CD4-positive, alpha-beta T cell (primary cell): ENCODE measurements at regions of chr14 and their contacts with region 1.

Region 1: GRCh38 chr14:105765893-105766614 is 239.7 kb downstream of the TMEM121 start:
- DNase-seq: no peak
- ATAC-seq: no peak
- H3K4me3 ChIP-seq: no peak overlapping the region
- H3K4me3 Mint-ChIP-seq: no peak overlapping the region
- H3K27ac ChIP-seq: no peak overlapping the region
- H3K27ac Mint-ChIP-seq: no peak overlapping the region
- H3K4me1 ChIP-seq: no peaks in the 10 kb centered on the region
- H3K4me1 Mint-ChIP-seq: no peaks in the 10 kb centered on the region
- H3K27me3 ChIP-seq: no peaks in the 10 kb centered on the region
- H3K27me3 Mint-ChIP-seq: peaks cover 6% of the 10 kb centered on the region
- CTCF ChIP-seq: no peak

Region 2: DNA sequence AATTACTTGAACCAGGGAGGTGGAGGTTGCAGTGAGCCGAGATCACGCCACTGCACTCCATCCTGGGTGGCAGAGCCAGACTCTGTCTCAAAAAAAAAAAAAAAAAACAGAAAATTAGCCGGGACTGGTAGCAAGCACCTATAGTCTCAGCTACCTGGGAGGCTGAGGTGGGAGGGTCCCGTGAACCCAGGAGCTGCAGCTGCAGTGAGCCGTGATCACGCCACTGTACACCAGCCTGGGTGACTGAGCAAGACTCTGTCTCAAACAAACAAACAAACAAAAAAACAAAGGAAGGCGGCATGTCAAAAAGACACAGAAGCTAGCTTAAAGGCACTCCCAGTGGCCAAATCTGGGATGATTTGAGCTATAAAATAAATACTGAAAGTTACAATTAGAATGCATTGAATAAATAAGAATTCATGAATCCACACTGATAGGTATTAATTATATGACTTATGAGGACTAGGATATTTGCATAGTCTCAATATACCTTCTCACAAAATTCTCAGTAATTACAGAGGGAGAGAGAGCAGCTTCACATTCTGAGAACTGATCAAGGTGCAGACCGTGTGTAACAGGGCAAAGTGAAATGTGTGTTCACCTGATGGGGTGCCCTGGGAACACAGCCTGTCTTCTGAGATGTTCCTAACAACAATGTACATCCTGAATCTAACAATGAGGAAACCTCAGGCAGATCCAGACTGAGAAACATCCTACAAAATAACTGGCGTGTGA is 658.1 kb before region 1 on chr14:
- CTCF ChIA-PET with region 1: no interaction called
- POLR2A ChIA-PET with region 1: no interaction called
- intact Hi-C with region 1: no loop called
- DNase-seq: no peak
- ATAC-seq: no peak
- H3K4me3 ChIP-seq: no peak overlapping the region
- H3K4me3 Mint-ChIP-seq: no peak overlapping the region
- H3K27ac ChIP-seq: no peak overlapping the region
- H3K27ac Mint-ChIP-seq: no peak overlapping the region
- H3K4me1 ChIP-seq: no peaks in the 10 kb centered on the region
- H3K4me1 Mint-ChIP-seq: no peaks in the 10 kb centered on the region
- H3K27me3 ChIP-seq: peaks cover 2 to 9% of the 10 kb centered on the region in 2 experiments
- H3K27me3 Mint-ChIP-seq: peaks cover 36% of the 10 kb centered on the region
- CTCF ChIP-seq: no peak

Region 3: DNA sequence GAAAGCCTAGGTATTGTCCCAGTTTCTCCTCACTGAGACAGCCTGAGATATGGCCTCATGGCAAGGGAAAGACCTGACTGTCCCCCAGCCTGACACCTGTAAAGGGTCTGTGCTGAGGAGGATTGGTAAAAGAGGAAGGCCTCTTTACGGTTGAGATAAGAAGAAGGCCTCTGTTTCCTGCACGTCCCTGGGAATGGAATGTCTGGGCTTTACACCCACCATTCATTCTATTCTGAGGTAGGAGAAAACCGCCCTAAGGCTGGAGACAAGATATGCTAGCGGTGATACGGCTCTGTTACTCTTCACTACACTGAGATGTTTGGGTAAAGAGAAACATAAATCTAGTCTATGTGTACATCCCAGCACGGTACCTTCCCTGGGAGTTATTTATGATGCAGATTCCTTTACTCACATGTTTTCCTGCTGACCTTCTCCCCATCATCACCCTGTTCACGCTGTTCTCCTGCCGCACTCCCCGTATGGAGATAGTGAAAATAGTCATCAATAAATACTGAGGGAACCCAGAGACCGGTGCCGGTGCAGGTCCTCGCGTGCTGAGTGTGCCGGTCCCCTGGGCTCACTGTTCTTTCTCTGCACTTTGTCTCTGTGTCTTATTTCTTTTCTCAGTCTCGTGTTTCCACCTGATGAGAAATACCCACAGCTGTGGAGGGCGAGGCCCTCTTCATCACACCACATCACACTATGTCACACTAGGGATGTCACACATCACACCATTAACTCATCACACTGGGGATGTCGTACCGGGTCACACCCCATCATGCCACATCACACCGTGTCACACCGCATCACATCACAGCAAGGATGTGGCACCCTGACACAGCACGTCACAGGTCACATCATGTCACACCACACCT is 33.1 kb before region 1 on chr14:
- CTCF ChIA-PET with region 1: no interaction called
- POLR2A ChIA-PET with region 1: no interaction called
- intact Hi-C with region 1: loop called in 1 of 2 experiments (anchors 5 kb)
- DNase-seq: no peak
- ATAC-seq: no peak
- H3K4me3 ChIP-seq: no peak overlapping the region
- H3K4me3 Mint-ChIP-seq: no peak overlapping the region
- H3K27ac ChIP-seq: no peak overlapping the region
- H3K27ac Mint-ChIP-seq: no peak overlapping the region
- H3K4me1 ChIP-seq: no peaks in the 10 kb centered on the region
- H3K4me1 Mint-ChIP-seq: no peaks in the 10 kb centered on the region
- H3K27me3 ChIP-seq: no peaks in the 10 kb centered on the region
- H3K27me3 Mint-ChIP-seq: peaks cover 10% of the 10 kb centered on the region
- CTCF ChIP-seq: no peak

Region 4: DNA sequence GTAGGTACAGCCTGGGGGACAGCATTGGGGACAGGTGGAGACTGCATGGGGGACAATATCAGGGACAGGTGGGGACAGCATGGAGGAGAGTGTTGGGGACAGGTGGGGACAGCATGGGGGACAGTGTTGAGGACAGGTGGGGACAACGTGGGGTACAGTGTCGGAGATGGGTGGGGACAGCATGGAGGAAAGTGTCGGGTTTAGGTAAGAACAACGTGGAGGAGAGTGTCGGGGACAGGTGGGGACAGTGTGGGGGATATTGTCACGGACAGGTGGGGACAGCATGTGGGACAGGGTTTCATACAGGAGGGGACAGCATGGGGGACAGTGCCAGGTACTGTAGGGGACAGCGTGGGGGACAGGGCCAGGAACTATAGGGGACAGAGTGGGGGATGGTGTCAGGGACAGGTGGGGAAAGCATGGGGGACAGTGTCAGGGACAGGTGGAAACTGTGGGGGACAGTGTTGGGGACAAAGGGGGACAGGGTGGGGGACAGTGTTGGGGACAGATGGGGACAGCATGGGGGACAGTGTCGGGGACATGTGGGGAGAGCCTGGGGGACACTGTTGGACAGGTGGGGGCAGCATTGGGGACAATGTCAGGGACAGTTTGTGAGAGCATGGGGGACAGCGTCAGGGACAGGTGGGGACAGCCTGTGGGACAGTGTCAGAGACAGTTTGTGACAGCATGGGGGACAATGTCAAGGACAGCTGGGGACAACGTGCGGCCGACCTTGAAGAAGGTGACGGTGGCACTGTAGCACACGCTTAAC is 26.5 kb before region 1 on chr14:
- CTCF ChIA-PET with region 1: no interaction called
- POLR2A ChIA-PET with region 1: no interaction called
- intact Hi-C with region 1: loop called in 1 of 2 experiments (anchors 2 kb)
- DNase-seq: no peak
- ATAC-seq: no peak
- H3K4me3 ChIP-seq: no peak overlapping the region
- H3K4me3 Mint-ChIP-seq: no peak overlapping the region
- H3K27ac ChIP-seq: no peak overlapping the region
- H3K27ac Mint-ChIP-seq: no peak overlapping the region
- H3K4me1 ChIP-seq: no peaks in the 10 kb centered on the region
- H3K4me1 Mint-ChIP-seq: no peaks in the 10 kb centered on the region
- H3K27me3 ChIP-seq: no peaks in the 10 kb centered on the region
- H3K27me3 Mint-ChIP-seq: no peaks in the 10 kb centered on the region
- CTCF ChIP-seq: no peak